ENCODE measurements at regions of chr11 and their contacts with region 1.

Region 1: DNA sequence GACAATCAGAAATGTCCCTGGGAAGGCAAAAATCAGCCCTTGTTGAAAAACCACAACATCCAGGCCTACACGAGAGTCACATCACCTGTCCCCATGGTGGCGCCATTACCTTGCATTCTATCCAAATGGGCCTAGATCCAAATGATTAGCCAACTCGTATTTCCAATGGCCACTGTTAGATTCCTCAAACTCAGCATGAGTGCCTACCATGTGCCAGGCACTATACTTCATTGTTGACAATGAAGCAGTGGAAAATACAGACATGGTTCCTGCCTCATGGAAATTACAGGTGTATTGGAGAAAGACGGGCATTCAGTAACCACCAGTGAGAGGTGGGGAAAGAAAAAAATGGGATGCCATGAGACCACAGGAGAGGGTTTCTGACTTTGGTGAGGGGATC is 29.8 kb upstream of the CREB3L1 start:
- DNase-seq: no peak
- ATAC-seq: no peak
- H3K4me3 ChIP-seq: no peak overlapping the region
- H3K27ac ChIP-seq: no peak overlapping the region
- H3K4me1 ChIP-seq: peaks cover 8% of the 10 kb centered on the region
- H3K27me3 ChIP-seq: no peaks in the 10 kb centered on the region
- CTCF ChIP-seq: peak; percentile 73

Region 2: GRCh38 chr11:46315033-46315738 is 67.5 kb after region 1 on chr11:
- CTCF ChIA-PET with region 1: interaction called, 5 read pairs
- POLR2A ChIA-PET with region 1: no interaction called
- in situ Hi-C with region 1: no loop called
- intact Hi-C with region 1: loop called (anchors 2 kb)
- DNase-seq: peak; percentile 51
- ATAC-seq: peak; percentile 76
- H3K4me3 ChIP-seq: no peak overlapping the region
- H3K27ac ChIP-seq: no peak overlapping the region
- H3K4me1 ChIP-seq: no peaks in the 10 kb centered on the region
- H3K27me3 ChIP-seq: no peaks in the 10 kb centered on the region
- CTCF ChIP-seq: peak; percentile 95